Naive thymus-derived CD4-positive, alpha-beta T cell (primary cell): ENCODE measurements at regions of chr20 and their contacts with region 1.

Region 1: GRCh38 chr20:38730989-38731737 is 6.9 kb downstream of the SLC32A1 start:
- DNase-seq: peak; percentile 53 to 84 (median 70)
- ATAC-seq: peak; percentile 87
- H3K4me3 ChIP-seq: peak overlapping the region; percentile 63
- H3K4me3 Mint-ChIP-seq: peak overlapping the region; percentile 65 to 86 (median 77)
- H3K27ac ChIP-seq: no peak overlapping the region
- H3K27ac Mint-ChIP-seq: peak overlapping the region in 6 of 9 donors; percentile 6 to 80 (median 44)
- H3K4me1 ChIP-seq: peaks cover 24 to 32% of the 10 kb centered on the region in 2 donors
- H3K4me1 Mint-ChIP-seq: peaks cover 32 to 52% (median 44%) of the 10 kb centered on the region in 7 donors
- H3K27me3 ChIP-seq: peaks cover 39 to 41% of the 10 kb centered on the region in 2 donors
- H3K27me3 Mint-ChIP-seq: peaks cover 89 to 96% (median 92%) of the 10 kb centered on the region in 5 donors

Region 2: DNA sequence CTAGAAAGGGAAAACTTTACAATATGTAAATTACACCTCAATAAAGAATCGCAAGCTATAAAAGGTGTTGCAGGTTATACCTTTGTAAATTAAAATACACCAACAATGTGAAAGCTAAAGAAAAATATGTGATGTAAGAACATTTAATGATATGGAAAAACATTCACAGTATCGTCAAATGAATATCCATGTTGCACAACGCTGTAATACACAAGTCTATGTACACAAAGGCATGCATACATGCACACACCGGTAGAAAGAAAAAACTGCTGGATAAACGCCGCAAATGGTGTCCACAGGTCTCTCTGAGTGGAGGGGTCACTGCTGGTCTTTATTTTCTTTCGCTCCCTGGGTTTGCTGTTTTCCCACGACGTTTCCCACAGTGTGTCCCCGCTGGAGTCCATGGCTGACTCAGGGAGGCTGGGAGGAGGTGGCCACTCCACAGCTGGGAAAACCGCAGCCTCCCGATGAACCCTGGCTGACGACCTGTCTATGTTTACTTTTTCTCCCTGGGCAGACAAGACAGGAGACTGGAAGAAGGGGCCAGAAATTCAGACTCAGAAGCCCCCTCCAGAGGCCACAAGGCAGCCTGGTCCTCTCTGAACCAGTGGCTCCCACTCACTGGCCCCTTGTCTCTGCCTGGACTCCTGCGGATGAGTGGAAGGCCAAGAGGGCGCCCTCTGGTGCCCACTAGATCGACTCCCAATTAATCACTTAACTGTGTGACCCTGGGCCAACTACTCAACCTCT is 440.2 kb before region 1 on chr20:
- CTCF ChIA-PET with region 1: no interaction called
- POLR2A ChIA-PET with region 1: no interaction called
- intact Hi-C with region 1: no loop called
- DNase-seq: no peak
- ATAC-seq: no peak
- H3K4me3 ChIP-seq: no peak overlapping the region
- H3K4me3 Mint-ChIP-seq: no peak overlapping the region
- H3K27ac ChIP-seq: no peak overlapping the region
- H3K27ac Mint-ChIP-seq: no peak overlapping the region
- H3K4me1 ChIP-seq: no peaks in the 10 kb centered on the region
- H3K4me1 Mint-ChIP-seq: peaks cover 0 to 8% (median 0%) of the 10 kb centered on the region in 7 donors
- H3K27me3 ChIP-seq: no peaks in the 10 kb centered on the region
- H3K27me3 Mint-ChIP-seq: peaks cover 13 to 52% (median 34%) of the 10 kb centered on the region in 5 donors

Region 3: GRCh38 chr20:38685853-38686473 is 45.2 kb before region 1 on chr20:
- CTCF ChIA-PET with region 1: no interaction called
- POLR2A ChIA-PET with region 1: no interaction called
- intact Hi-C with region 1: loop called in 1 of 2 experiments (anchors 5 kb)
- DNase-seq: peak in 6 of 9 donors; percentile 7 to 50 (median 27)
- ATAC-seq: peak; percentile 48
- H3K4me3 ChIP-seq: no peak overlapping the region
- H3K4me3 Mint-ChIP-seq: no peak overlapping the region
- H3K27ac ChIP-seq: no peak overlapping the region
- H3K27ac Mint-ChIP-seq: no peak overlapping the region
- H3K4me1 ChIP-seq: no peaks in the 10 kb centered on the region
- H3K4me1 Mint-ChIP-seq: no peaks in the 10 kb centered on the region
- H3K27me3 ChIP-seq: peaks cover 0 to 4% of the 10 kb centered on the region in 2 donors
- H3K27me3 Mint-ChIP-seq: peaks cover 22 to 76% (median 74%) of the 10 kb centered on the region in 5 donors

Region 4: DNA sequence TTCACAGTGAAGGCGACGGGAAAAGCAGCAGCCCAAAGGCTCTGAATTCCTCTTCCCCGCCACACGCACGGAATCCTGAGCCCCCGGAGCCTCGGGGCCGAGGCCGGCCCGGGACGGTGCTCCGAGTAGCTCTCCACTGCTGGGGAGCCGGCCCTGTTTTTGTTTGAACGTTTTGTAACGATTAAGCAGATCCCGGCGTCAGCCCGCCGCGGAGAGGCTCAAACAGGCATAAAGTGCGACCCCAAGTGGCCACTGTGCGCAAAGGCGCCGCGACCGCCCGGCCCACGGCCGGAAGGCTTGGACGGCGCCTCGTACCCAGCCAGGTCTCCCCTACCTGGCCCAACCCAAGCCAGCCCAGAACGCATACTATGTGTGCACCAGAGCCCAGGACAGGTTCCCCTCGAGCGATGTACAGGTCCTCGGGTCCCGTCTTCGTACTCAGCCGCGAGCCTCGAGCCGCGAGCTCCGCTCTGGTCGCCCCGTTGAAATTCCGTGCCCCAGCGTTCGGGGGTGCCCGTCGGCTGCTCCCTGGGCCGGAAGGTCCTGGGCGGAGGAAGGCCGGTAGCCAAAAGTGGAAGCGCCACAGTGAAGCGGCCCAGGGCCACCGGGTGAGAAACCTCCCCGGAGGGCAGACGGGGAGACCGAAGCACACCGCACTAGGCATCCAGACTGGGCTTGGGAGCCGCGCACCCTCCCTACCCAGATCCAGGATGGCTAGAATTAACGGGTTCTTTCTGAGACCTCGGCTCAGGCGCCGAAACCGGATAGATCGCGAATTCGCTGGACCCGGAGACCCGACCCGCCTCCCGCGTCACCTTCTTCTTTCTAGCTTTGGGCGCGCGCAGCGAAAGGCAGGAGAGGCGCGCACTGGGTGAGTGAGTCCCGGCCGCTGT is 1959.0 kb after region 1 on chr20:
- CTCF ChIA-PET with region 1: no interaction called
- POLR2A ChIA-PET with region 1: no interaction called
- intact Hi-C with region 1: loop called in 1 of 2 experiments (anchors 5 kb)
- DNase-seq: peak in 6 of 9 donors; percentile 23 to 77 (median 27)
- ATAC-seq: peak; percentile 45
- H3K4me3 ChIP-seq: no peak overlapping the region
- H3K4me3 Mint-ChIP-seq: peak overlapping the region; percentile 20 to 84 (median 66)
- H3K27ac ChIP-seq: no peak overlapping the region
- H3K27ac Mint-ChIP-seq: peak overlapping the region in 1 of 9 donors; percentile 65
- H3K4me1 ChIP-seq: no peaks in the 10 kb centered on the region
- H3K4me1 Mint-ChIP-seq: peaks cover 0 to 15% (median 6%) of the 10 kb centered on the region in 7 donors
- H3K27me3 ChIP-seq: peaks cover 2 to 4% of the 10 kb centered on the region in 2 donors
- H3K27me3 Mint-ChIP-seq: peaks cover 59 to 92% (median 75%) of the 10 kb centered on the region in 5 donors